HEK293 (cell line): ENCODE measurements at regions of chr6 and their contacts with region 1.

Region 1: DNA sequence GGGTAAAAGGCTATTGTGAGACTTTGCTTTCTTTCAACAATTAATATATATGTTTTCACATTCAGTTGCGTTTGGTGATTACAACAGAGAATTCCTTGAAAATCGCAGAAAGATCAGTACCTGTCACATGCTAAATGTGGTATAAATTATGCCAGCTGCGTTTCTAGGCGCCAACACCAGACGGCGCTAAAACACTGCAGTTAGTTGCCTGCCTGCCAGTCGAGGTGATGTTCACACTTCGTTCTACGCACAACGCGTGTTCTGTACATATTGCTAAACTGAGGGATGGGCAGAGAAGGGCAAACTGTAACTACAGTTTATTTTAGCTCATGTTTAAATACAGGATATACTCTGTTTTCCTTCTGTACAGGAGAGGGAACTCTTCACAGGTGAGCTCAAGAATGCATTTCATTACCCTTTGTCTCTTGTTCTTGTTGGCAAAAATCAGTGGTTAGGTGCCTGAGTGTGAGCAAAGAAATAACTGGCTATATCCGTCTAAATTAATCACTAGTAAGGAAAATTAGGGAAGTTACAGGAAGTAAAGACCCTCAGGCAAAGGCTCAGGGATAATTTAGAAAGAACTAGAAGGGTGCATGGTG is 100.1 kb upstream of the RGS17 start:
- H3K4me3 ChIP-seq: no peak overlapping the region
- H3K27ac ChIP-seq: no peak overlapping the region
- H3K4me1 ChIP-seq: no peaks in the 10 kb centered on the region
- CTCF ChIP-seq: 0 out of 2 replicates have a peak, but pooled peaks have one; percentile 30

Region 2: DNA sequence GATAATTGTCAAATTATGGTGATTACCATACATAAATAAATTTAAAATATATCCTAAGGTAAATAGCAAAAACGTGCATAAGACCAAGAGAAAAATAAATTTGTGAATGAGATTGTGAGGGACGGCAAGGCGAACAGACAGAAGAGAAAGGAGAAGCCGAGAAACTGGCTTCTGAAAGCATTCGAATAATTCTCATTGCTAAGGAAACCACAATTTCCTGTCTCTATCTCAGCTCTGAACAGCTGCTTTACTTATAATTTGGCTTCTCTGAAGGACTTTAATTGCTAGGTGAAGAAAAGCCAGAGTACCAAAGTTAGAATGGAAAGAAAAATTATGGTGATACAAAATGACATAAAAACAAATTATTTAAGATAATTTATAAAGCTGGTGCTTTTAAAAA is 21.1 kb before region 1 on chr6:
- CTCF ChIA-PET with region 1: interaction called, 10 read pairs
- POLR2A ChIA-PET with region 1: no interaction called
- H3K4me3 ChIP-seq: no peak overlapping the region
- H3K27ac ChIP-seq: no peak overlapping the region
- H3K4me1 ChIP-seq: no peaks in the 10 kb centered on the region
- CTCF ChIP-seq: no peak

Region 3: GRCh38 chr6:153218184-153218792 is 12.9 kb before region 1 on chr6:
- CTCF ChIA-PET with region 1: interaction called, 18 read pairs
- POLR2A ChIA-PET with region 1: no interaction called
- H3K4me3 ChIP-seq: no peak overlapping the region
- H3K27ac ChIP-seq: no peak overlapping the region
- H3K4me1 ChIP-seq: no peaks in the 10 kb centered on the region
- CTCF ChIP-seq: no peak

Region 4: DNA sequence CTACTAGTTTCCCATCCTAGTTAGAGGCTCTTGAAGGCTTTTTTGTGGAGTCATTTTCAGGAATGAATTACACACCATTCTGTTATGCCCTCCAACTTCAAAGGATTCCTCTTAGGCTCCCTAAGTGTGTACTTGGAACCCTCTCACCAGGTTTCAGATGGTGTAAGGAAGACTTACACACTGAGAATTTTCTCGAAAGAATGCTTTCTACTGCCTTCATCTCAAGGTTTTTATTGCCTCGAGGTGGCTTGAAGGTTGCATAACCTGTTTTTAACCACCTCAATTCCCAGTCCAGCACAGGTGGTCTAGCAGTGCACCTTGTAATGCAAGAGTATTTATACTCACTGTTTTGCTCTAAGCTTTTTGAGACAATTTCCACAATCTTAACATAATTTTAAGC is 11.6 kb after region 1 on chr6:
- CTCF ChIA-PET with region 1: interaction called, 21 read pairs
- POLR2A ChIA-PET with region 1: no interaction called
- H3K4me3 ChIP-seq: no peak overlapping the region
- H3K27ac ChIP-seq: no peak overlapping the region
- H3K4me1 ChIP-seq: no peaks in the 10 kb centered on the region
- CTCF ChIP-seq: no peak

Region 5: GRCh38 chr6:153373869-153374268 is 142.7 kb after region 1 on chr6:
- CTCF ChIA-PET with region 1: no interaction called
- POLR2A ChIA-PET with region 1: no interaction called
- H3K4me3 ChIP-seq: no peak overlapping the region
- H3K27ac ChIP-seq: no peak overlapping the region
- H3K4me1 ChIP-seq: no peaks in the 10 kb centered on the region
- CTCF ChIP-seq: no peak

Region 6: GRCh38 chr6:153489479-153489878 is 258.3 kb after region 1 on chr6:
- CTCF ChIA-PET with region 1: no interaction called
- POLR2A ChIA-PET with region 1: no interaction called
- H3K4me3 ChIP-seq: no peak overlapping the region
- H3K27ac ChIP-seq: no peak overlapping the region
- H3K4me1 ChIP-seq: no peaks in the 10 kb centered on the region
- CTCF ChIP-seq: no peak

Region 7: DNA sequence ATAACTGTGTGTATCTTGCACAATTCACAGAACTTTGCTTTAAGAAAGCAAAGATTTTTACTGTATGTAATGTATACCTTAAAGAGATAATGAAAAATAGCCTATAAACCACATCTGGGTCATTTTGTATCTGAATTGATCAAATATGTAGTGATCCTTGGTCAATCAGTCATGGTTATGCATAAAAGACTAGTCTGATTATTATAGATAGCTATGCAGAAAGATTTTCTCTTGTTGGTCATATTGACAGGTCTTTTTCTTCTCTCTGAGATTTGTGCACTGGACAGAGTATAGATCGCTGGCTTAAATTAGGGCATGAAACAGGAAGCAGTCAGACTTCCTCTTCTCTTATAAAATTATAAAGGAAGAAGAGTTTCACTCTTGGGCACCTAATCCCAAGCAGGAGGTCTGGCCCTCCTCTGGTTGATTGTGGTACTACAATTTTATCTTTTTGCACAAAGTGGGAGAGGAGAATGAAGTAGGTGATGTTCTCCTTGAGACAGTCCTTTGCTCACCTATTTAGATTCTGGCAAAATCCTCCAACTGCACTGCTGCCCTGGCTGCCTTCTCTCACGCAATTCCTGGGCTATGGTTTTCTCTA is 280.8 kb after region 1 on chr6:
- CTCF ChIA-PET with region 1: interaction called, 12 read pairs
- POLR2A ChIA-PET with region 1: no interaction called
- H3K4me3 ChIP-seq: no peak overlapping the region
- H3K27ac ChIP-seq: no peak overlapping the region
- H3K4me1 ChIP-seq: no peaks in the 10 kb centered on the region
- CTCF ChIP-seq: no peak